T-cell (primary cell): ENCODE measurements at regions of chr2 and their contacts with region 1.

Region 1: DNA sequence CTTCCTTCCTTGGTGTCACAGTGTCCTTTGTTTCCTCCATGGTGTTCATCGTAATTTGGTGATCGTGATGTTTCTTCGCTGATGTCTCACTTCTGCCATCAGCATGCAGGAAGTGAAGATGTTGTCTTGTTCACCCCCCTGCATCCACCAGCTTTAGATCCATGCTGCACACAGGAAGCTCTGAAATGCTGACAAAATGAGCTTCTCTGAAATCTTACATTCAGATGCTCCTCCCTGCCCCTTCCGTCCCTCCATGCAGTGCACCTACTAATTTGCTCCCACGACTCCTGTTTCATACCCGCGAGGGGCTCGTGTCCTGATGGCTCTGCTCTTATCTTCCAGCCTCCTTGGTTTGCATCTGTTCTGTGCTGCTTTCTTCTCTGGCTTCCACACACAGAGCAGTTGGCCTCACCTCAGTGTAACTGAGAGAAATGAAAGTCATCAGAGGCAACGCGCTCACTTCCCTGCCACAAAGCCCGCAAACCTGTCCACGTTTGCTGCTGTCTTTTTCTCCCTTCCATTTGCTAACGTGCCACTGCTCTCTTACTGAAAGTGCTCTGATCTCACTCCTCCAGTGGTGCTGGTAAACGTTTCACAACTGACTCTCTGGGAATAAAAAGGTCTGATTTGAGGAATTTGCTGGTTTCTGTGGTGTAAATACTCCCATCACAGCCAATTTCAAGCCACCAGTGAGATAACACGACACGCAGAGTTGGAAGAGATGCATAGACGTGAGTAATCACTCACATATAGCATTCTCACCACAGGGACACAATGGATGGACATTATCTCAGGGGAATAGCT is 41.0 kb upstream of the MGAT4A start:
- DNase-seq: peak; percentile 52 to 90 (median 72)
- ATAC-seq: peak; percentile 80 to 82 (median 81)
- H3K4me3 ChIP-seq: peak overlapping the region; percentile 52 to 62
- H3K4me3 Mint-ChIP-seq: peak overlapping the region; percentile 83 to 98 (median 89)
- H3K27ac ChIP-seq: peak overlapping the region; percentile 95
- H3K27ac Mint-ChIP-seq: peak overlapping the region; percentile 99 to 100
- H3K4me1 ChIP-seq: peaks cover 60 to 88% of the 10 kb centered on the region in 2 experiments
- H3K4me1 Mint-ChIP-seq: peaks cover 83 to 93% (median 92%) of the 10 kb centered on the region in 3 donors
- H3K27me3 ChIP-seq: no peaks in the 10 kb centered on the region
- H3K27me3 Mint-ChIP-seq: no peaks in the 10 kb centered on the region

Region 2: DNA sequence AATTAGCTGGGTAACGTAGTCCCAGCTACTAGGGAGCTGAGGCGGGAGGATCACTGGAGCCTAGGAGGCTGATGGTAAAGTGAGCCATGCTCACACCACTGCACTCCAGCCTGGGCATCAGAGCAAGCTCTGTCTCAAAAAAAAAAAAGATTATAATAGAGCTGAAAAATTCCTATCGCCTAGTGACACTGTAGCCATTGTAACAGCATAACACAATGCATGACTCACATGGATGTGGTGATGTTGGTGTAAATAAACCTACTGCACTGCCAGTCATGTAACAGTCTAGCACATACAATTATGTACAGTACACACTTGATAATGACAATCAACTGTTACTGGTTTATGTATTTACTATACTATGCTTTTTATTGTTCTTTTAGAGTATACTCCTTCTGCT is 80.6 kb before region 1 on chr2:
- CTCF ChIA-PET with region 1: no interaction called
- POLR2A ChIA-PET with region 1: no interaction called
- DNase-seq: peak in 1 of 35 experiments; percentile 33
- ATAC-seq: peak in 3 of 4 experiments; percentile 53 to 72 (median 59)
- H3K4me3 ChIP-seq: no peak overlapping the region
- H3K4me3 Mint-ChIP-seq: no peak overlapping the region
- H3K27ac ChIP-seq: no peak overlapping the region
- H3K27ac Mint-ChIP-seq: peak overlapping the region; percentile 64 to 90
- H3K4me1 ChIP-seq: peaks cover 26 to 54% of the 10 kb centered on the region in 2 experiments
- H3K4me1 Mint-ChIP-seq: peaks cover 90 to 95% (median 90%) of the 10 kb centered on the region in 3 donors
- H3K27me3 ChIP-seq: no peaks in the 10 kb centered on the region
- H3K27me3 Mint-ChIP-seq: no peaks in the 10 kb centered on the region

Region 3: GRCh38 chr2:98757904-98758421 is 14.0 kb before region 1 on chr2:
- CTCF ChIA-PET with region 1: interaction called, 4 to 14 read pairs
- POLR2A ChIA-PET with region 1: interaction called in 1 of 2 experiments, 8 read pairs
- DNase-seq: peak; percentile 36 to 84 (median 59)
- ATAC-seq: peak; percentile 78 to 85 (median 82)
- H3K4me3 ChIP-seq: peak overlapping the region; percentile 20 to 46
- H3K4me3 Mint-ChIP-seq: peak overlapping the region; percentile 61 to 86 (median 75)
- H3K27ac ChIP-seq: peak overlapping the region; percentile 78
- H3K27ac Mint-ChIP-seq: peak overlapping the region; percentile 98 to 99
- H3K4me1 ChIP-seq: peaks cover 46 to 51% of the 10 kb centered on the region in 2 experiments
- H3K4me1 Mint-ChIP-seq: peaks cover 75 to 85% (median 75%) of the 10 kb centered on the region in 3 donors
- H3K27me3 ChIP-seq: no peaks in the 10 kb centered on the region
- H3K27me3 Mint-ChIP-seq: no peaks in the 10 kb centered on the region

Region 4: DNA sequence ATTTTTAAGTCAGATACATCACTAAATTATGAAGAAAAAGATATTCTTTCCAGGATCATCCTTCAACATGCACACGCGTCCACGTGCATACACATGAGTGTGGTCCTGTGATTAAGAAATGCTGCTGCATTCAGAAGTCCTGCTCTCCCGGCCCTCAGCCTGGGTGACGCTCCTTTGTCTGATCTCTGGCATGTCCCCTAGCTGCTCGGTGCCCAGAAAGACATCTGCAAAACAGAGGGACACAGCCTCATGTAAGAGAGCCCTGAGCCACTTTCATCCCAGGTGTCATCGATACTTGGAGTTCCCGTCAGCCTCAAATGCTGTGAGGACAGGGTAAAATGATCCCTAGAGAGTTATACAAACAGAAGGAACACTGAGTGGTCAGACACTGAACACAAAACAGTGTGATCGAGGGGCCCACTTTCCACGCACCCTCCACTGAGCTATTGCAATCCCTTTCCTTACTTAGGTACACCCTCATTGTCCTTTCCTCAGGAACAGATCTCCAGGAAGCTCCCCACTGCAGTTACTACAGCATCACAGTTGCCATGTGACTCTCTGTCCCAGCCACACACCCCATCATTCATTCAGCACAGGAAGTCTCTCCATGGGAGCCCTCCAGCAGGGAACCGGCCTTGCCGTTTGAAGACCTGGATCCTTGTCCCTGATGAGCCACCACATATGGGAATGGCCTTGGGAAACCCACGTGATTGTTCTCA is 132.0 kb after region 1 on chr2:
- CTCF ChIA-PET with region 1: no interaction called
- POLR2A ChIA-PET with region 1: no interaction called
- DNase-seq: no peak
- ATAC-seq: no peak
- H3K4me3 ChIP-seq: no peak overlapping the region
- H3K4me3 Mint-ChIP-seq: no peak overlapping the region
- H3K27ac ChIP-seq: no peak overlapping the region
- H3K27ac Mint-ChIP-seq: no peak overlapping the region
- H3K4me1 ChIP-seq: no peaks in the 10 kb centered on the region
- H3K4me1 Mint-ChIP-seq: peaks cover 4 to 5% (median 5%) of the 10 kb centered on the region in 3 donors
- H3K27me3 ChIP-seq: peaks cover 0 to 7% of the 10 kb centered on the region in 2 experiments
- H3K27me3 Mint-ChIP-seq: peaks cover 4 to 14% of the 10 kb centered on the region in 2 donors